Heart left ventricle (tissue), 16 donors: ENCODE measurements at regions of chr7 and their contacts with region 1.

Region 1: DNA sequence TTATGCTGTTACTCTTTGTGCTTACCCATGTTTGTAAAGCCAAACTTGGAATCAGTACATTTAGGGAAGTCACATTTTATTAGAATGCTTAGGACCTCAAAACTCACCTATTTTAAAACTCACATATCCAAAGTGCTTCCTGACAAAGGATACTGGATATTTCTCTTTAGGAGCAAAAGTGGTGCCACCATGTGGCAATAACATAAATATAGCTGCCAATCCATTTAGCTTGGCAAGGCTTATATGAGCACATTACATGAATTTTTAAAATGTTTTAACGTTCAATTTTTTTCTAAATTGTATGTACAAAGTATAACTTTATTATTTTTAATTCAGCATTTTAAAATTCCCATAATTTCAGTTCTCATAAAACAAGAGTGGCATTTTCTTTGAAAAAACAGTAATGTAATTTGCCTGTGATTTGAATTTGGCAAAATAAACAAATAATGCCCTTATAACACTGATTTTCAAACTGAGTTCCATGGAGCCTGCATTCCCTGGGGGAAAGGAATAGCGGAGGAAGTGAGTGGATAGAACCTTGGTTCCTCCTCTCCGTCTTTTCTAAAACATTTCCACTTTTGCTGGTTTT is 75.4 kb downstream of the HDAC9 start:
- DNase-seq: no peak
- ATAC-seq: peak in 3 of 4 donors; percentile 37 to 41 (median 38)
- H3K4me3 ChIP-seq: no peak overlapping the region
- H3K27ac ChIP-seq: no peak overlapping the region
- H3K4me1 ChIP-seq: peaks cover 0 to 35% (median 8%) of the 10 kb centered on the region in 12 donors
- H3K27me3 ChIP-seq: no peaks in the 10 kb centered on the region
- CTCF ChIP-seq: peak; percentile 16 to 69 (median 52)
- POLR2A ChIP-seq: no peak

Region 2: GRCh38 chr7:18352339-18353255 is 218.4 kb before region 1 on chr7:
- intact Hi-C with region 1: loop called (anchors 2 to 5 kb)
- DNase-seq: peak in 4 of 5 donors; percentile 26 to 30 (median 29)
- ATAC-seq: peak in 3 of 4 donors; percentile 63 to 77 (median 71)
- H3K4me3 ChIP-seq: no peak overlapping the region
- H3K27ac ChIP-seq: no peak overlapping the region
- H3K4me1 ChIP-seq: peaks cover 0 to 12% (median 5%) of the 10 kb centered on the region in 12 donors
- H3K27me3 ChIP-seq: no peaks in the 10 kb centered on the region
- CTCF ChIP-seq: peak; percentile 33 to 77 (median 62)
- POLR2A ChIP-seq: no peak

Region 3: GRCh38 chr7:18393465-18394118 is 177.4 kb before region 1 on chr7:
- intact Hi-C with region 1: loop called in 1 of 10 experiments (anchors 10 kb)
- DNase-seq: no peak
- ATAC-seq: peak in 1 of 4 donors; percentile 57
- H3K4me3 ChIP-seq: no peak overlapping the region
- H3K27ac ChIP-seq: peak overlapping the region in 7 of 12 donors; percentile 5 to 46 (median 14)
- H3K4me1 ChIP-seq: peaks cover 0 to 44% (median 24%) of the 10 kb centered on the region in 12 donors
- H3K27me3 ChIP-seq: no peaks in the 10 kb centered on the region
- CTCF ChIP-seq: no peak
- POLR2A ChIP-seq: no peak

Region 4: DNA sequence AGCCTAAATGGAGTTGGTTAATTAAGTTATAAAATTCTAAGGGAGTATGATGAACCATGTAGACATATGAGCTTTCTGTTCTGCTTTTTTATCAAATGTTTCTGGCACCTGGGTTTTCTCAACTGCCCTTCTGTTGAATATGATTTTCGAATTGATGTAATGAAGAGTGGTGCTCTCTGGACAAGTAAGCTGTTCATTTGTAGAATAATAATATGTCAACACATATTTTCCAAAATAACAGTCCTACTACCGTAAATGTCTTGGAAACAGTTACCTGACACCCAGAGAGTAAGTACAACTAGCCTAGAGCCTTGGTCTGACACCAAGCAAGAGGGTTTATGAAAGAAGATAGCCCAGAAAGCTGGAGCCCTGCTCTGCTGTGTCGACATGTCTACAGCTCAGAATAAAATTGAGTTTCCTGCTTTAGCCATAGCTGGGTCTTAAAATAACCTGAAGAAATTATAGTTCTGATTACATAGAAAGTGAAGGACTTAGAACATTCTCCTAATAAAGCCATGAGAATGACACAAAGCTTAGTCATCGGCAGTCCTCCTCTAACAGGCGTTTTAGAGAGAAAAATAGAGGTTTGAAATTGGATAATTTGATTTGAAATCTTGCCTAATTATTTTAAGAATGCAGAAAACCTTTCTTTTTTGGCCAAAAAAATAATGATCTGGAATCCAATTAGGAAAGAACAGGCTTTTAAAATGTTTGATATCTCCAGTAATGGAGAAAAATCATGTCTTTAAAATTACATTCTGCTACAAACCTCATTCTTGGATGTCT is 50.3 kb before region 1 on chr7:
- intact Hi-C with region 1: no loop called
- DNase-seq: no peak
- ATAC-seq: peak; percentile 34 to 81 (median 68)
- H3K4me3 ChIP-seq: peak overlapping the region in 3 of 12 donors; percentile 3 to 6 (median 3)
- H3K27ac ChIP-seq: peak overlapping the region in 10 of 12 donors; percentile 4 to 67 (median 30)
- H3K4me1 ChIP-seq: peaks cover 0 to 28% (median 6%) of the 10 kb centered on the region in 12 donors
- H3K27me3 ChIP-seq: no peaks in the 10 kb centered on the region
- CTCF ChIP-seq: no peak
- POLR2A ChIP-seq: no peak

Region 5: DNA sequence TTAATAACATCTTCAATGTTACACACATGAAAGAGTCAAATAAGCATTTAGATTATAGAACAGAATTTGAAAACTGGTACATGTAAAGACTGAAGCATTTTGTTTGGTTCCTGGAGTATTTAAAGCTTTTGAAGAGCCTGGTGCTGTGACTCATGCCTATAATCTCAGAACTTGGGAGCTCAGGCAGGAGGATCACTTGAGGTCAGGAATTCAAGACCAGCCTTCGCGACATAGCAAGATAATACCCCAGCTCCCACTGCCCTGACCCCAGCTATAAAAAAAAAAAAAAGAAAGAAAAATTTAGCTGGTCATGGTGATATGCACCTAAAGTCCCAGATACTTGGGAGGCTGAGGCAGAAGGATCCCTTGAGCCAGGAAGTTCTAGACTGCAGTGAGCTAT is 12.3 kb after region 1 on chr7:
- intact Hi-C with region 1: loop called in 1 of 10 experiments (anchors 1 kb)
- DNase-seq: no peak
- ATAC-seq: peak in 3 of 4 donors; percentile 52 to 75 (median 71)
- H3K4me3 ChIP-seq: no peak overlapping the region
- H3K27ac ChIP-seq: no peak overlapping the region
- H3K4me1 ChIP-seq: peaks cover 0 to 18% (median 5%) of the 10 kb centered on the region in 12 donors
- H3K27me3 ChIP-seq: no peaks in the 10 kb centered on the region
- CTCF ChIP-seq: no peak
- POLR2A ChIP-seq: no peak